ENCODE measurements at regions of chr7 and their contacts with region 1.

Region 1: DNA sequence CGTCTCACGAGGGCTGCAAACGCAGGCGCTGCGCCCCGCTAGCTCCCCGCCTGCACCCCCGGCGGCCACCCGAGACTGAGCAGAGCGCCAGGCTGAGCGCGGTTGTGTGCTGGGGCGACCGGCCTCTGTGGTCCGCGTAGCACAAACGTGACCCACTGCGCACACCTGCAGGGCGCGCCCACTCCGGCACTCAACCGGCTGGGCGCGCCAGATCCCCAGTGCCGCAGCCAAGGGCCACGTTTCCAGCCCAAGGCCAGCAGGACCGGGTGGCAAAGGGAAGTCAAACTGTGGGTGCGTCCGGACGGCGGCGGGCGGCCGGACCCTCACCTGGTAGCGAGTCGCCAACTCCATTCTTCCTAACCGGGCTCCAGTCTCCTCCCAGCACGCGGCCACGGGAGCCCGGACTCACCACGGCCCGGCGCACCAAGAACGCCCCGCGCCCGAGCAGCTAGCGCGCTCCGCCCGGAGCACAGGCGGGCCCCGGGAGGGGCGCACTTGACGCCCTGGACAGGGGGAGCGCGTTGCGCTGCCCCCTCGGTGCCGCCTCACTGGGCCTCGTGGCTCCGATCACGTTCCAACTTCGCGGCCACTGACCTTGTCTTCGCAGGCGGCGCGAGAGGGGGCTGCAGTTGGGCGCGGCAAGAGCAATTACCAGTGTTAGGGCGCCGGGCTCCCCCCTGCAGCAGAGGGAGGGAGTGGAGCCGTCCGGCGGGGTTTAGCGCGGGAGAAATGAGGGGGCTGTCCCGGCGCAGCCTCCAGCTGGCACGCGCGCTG is at the start of gene CDCA7L:
- DNase-seq: peak; percentile 75
- ATAC-seq: peak; percentile 75
- H3K4me3 ChIP-seq: peak within 1 kb of the TSS; percentile 97
- H3K27ac ChIP-seq: peak within 1 kb of the TSS; percentile 76
- H3K4me1 ChIP-seq: peaks cover 43% of the 10 kb centered on the region
- H3K27me3 ChIP-seq: no peaks in the 10 kb centered on the region
- CTCF ChIP-seq: no peak
- total RNA-seq, gene CDCA7L: 59.9 and 78.4 TPM in 2 replicates

Region 2: DNA sequence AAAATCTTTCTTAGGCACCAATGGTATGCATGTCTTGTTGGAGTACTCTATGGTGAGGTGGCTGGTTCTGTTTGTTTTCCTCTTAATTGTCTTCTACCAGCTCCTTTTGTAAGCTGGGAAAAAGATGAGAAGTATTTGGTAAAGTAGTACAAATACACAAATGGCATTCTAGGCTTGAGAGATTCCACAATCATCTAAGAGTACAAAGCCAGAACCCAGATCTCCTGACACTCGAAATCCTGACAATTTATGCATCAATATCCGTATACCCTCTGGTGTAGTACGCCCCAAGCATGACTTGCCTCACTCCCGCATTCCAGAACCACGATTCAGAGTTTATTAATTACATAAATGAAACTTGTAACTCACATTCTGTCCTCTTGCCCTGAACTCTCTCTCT is 43.4 kb before region 1 on chr7:
- CTCF ChIA-PET with region 1: no interaction called
- POLR2A ChIA-PET with region 1: interaction called, 4 read pairs
- intact Hi-C with region 1: loop called (anchors 5 kb)
- DNase-seq: peak; percentile 58
- ATAC-seq: peak; percentile 78
- H3K4me3 ChIP-seq: no peak overlapping the region
- H3K27ac ChIP-seq: peak overlapping the region; percentile 21
- H3K4me1 ChIP-seq: peaks cover 18% of the 10 kb centered on the region
- H3K27me3 ChIP-seq: no peaks in the 10 kb centered on the region
- CTCF ChIP-seq: no peak

Region 3: DNA sequence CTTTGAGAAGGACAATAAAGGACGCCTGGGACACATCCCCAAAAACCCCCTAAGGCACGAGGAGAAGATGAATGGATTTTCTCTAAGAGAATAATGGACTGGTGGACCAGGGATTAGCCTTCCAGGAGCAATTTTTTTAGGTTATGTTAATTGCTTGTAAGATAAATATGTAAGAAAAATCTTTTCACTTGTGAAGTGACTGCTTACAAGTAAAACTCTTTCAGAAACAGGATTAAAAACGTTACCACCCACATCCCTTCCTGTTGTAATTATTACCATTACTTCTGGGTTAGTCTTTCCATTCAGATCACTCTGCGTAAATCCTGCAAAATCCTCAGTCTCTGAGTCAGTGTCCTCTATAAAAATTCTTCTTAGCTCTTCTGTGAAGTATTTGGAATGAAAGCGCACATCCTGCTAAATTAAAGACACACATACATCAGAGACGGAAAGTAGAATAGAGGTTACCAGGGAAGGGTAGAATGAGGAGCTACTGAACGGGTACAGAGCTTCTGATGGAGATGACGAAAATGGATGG is 34.2 kb before region 1 on chr7:
- CTCF ChIA-PET with region 1: interaction called, 4 read pairs
- POLR2A ChIA-PET with region 1: interaction called, 14 read pairs
- intact Hi-C with region 1: loop called (anchors 1 kb)
- DNase-seq: peak; percentile 63
- ATAC-seq: peak; percentile 95
- H3K4me3 ChIP-seq: no peak overlapping the region
- H3K27ac ChIP-seq: peak overlapping the region; percentile 57
- H3K4me1 ChIP-seq: peaks cover 15% of the 10 kb centered on the region; the same call in 1 of the 2 replicates
- H3K27me3 ChIP-seq: no peaks in the 10 kb centered on the region
- CTCF ChIP-seq: no peak

Region 4: DNA sequence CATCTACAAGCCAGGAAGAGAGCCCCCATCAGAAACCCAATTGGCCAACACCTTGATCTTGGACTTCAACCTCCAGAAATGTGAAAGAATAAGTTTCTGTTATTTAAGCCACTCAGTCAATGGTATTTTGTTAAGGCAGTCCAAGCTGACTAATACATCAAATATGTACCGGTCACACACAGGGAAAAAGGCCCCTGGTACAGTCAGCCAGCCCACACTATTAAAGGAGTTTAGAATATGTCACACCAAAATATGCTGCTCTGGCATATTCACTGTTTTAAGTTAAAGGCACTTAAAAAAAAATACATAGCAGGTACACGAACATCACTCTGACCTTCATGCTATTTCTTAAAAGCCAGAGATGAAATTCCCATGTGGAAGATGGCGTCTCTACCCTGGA is 15.3 kb after region 1 on chr7:
- CTCF ChIA-PET with region 1: no interaction called
- POLR2A ChIA-PET with region 1: interaction called, 5 read pairs
- intact Hi-C with region 1: loop called (anchors 1 kb)
- DNase-seq: peak; percentile 81
- ATAC-seq: peak; percentile 96
- H3K4me3 ChIP-seq: no peak overlapping the region
- H3K27ac ChIP-seq: no peak overlapping the region
- H3K4me1 ChIP-seq: peaks cover 10% of the 10 kb centered on the region
- H3K27me3 ChIP-seq: no peaks in the 10 kb centered on the region
- CTCF ChIP-seq: no peak

Region 5: DNA sequence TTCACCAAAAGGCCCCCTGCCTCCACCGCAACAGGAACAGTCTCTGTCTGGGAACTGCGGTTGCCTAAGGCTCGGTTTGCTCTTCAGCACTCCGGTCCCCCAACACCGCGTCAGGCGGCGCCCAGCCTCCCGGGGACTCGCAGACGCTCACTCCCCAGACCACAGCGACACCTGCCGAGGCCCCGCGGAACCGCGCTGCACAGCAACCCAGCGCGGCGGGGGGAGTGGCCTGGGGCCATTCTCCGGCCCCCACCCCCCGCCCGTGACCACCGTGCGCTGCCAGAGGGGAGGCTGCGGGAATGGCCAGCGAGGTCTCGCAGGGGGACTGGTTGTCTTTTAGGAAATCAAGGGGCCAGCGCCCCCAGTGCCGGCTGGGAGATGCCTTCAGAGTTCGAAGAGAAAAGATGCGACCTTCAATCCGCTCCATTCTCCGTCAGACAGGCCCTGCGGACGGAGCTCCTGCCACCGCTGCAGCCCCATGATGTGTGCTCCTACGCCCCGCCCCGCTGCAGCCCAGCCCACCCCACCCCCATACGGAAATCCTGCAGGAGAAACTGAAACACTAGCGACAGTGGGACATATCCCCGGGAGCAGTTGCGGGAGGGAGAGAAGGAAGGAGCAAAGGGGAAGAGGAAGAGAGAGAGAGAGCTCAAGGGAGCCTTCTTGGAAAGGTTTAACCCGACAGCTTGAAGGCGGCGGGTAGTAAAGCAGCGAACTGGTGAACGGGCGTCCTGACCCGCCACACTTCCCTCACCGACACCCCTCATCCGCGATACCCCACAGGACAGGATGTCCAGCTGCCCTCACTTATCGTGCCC is 137.5 kb after region 1 on chr7:
- CTCF ChIA-PET with region 1: interaction called, 4 read pairs
- POLR2A ChIA-PET with region 1: no interaction called
- intact Hi-C with region 1: loop called (anchors 1 kb)
- DNase-seq: peak; percentile 79
- ATAC-seq: peak; percentile 95
- H3K4me3 ChIP-seq: peak overlapping the region; percentile 77
- H3K27ac ChIP-seq: no peak overlapping the region
- H3K4me1 ChIP-seq: peaks cover 11% of the 10 kb centered on the region; the same call in 1 of the 2 replicates
- H3K27me3 ChIP-seq: peaks cover 12% of the 10 kb centered on the region
- CTCF ChIP-seq: peak; percentile 89

Region 6: DNA sequence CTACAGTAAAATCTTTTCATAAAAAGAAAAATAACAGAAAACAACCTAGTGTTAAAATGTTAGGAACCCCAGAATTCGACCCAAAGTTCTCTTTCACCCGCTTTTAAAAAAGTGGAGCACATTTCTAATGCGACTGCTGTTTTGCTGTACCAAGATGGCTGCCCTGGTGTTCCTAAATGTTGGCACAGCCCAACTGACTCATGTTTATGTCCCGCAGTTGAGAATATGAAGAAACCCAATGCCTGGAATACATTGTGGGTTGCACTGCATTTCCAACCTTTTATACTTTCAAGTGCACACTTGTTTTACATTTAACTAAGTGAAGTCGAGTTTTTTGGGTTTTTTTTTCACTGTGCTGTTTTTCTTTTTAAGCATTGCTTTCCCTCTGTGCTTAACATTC is 553.4 kb after region 1 on chr7:
- CTCF ChIA-PET with region 1: no interaction called
- POLR2A ChIA-PET with region 1: no interaction called
- intact Hi-C with region 1: loop called (anchors 5 kb)
- DNase-seq: no peak
- ATAC-seq: no peak
- H3K4me3 ChIP-seq: no peak overlapping the region
- H3K27ac ChIP-seq: no peak overlapping the region
- H3K4me1 ChIP-seq: peaks cover 14% of the 10 kb centered on the region
- H3K27me3 ChIP-seq: no peaks in the 10 kb centered on the region
- CTCF ChIP-seq: no peak

Measured in PC-3 (cell line).